Sigmoid colon (tissue), 7 donors: ENCODE measurements at regions of chr15 and their contacts with region 1.

Region 1: DNA sequence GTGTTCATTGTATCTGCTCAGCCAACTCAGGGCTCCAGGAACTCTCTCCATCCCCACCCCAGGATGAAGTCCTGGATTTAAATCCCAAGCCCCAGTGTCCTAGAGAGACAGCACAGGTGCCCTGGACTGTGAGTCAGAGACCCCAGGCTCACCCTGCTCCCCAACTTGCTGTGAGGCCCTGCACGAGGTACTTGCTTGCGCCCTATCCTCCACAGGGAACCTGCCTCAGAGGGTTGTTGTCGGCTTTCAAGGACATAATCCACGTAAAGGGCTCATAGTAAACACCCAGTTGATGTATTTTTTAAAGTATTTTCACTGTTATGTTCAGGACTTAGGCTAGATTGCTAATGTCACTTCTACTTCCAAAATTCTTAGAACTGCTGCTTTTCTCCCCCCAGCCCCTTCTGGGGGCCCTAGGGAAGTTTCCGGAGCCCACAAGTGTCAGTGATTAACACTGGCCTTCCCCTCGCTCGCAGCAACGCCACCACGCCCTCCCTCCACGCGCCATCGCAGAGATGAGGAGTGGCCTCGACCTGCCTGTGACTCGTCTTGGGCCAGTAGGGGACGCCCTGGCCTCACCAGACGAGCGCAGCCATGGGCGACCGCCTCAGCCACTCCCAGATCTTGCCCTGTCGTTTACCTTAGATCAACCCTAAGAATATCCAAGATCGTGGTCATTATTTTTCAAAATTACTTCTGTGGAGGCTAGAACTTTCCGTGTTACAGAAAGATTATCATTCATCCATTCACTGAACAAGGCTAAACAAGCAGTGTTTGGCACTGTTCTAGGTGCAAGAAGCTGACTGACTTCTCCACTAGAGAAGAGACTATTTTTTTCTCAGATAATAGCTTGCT is 6.0 kb upstream of the SRP14 start:
- DNase-seq: peak; percentile 93
- H3K4me3 ChIP-seq: peak overlapping the region in 1 of 4 donors; percentile 18
- H3K27ac ChIP-seq: peak overlapping the region; percentile 31 to 65 (median 47)
- H3K4me1 ChIP-seq: peaks cover 0 to 55% (median 40%) of the 10 kb centered on the region in 4 donors
- H3K27me3 ChIP-seq: no peaks in the 10 kb centered on the region
- CTCF ChIP-seq: peak; percentile 90 to 93 (median 92)
- EP300 ChIP-seq: no peak
- POLR2A ChIP-seq: no peak

Region 2: GRCh38 chr15:39728845-39729244 is 316.1 kb before region 1 on chr15:
- intact Hi-C with region 1: no loop called
- DNase-seq: no peak
- H3K4me3 ChIP-seq: no peak overlapping the region
- H3K27ac ChIP-seq: no peak overlapping the region
- H3K4me1 ChIP-seq: no peaks in the 10 kb centered on the region
- H3K27me3 ChIP-seq: no peaks in the 10 kb centered on the region
- CTCF ChIP-seq: no peak
- EP300 ChIP-seq: no peak
- POLR2A ChIP-seq: no peak

Region 3: GRCh38 chr15:40160689-40161688 is 116.0 kb after region 1 on chr15 and contains the start of gene BUB1B:
- intact Hi-C with region 1: loop called (anchors 2 kb)
- DNase-seq: peak; percentile 95
- H3K4me3 ChIP-seq: peak within 1 kb of the TSS; percentile 28 to 60 (median 50)
- H3K27ac ChIP-seq: no peak within 1 kb of the TSS
- H3K4me1 ChIP-seq: peaks cover 0 to 13% (median 6%) of the 10 kb centered on the region in 4 donors
- H3K27me3 ChIP-seq: no peaks in the 10 kb centered on the region
- CTCF ChIP-seq: no peak
- EP300 ChIP-seq: no peak
- POLR2A ChIP-seq: no peak
- total RNA-seq, gene BUB1B: 0.33 to 3.6 (median 1.2) TPM

Region 4: DNA sequence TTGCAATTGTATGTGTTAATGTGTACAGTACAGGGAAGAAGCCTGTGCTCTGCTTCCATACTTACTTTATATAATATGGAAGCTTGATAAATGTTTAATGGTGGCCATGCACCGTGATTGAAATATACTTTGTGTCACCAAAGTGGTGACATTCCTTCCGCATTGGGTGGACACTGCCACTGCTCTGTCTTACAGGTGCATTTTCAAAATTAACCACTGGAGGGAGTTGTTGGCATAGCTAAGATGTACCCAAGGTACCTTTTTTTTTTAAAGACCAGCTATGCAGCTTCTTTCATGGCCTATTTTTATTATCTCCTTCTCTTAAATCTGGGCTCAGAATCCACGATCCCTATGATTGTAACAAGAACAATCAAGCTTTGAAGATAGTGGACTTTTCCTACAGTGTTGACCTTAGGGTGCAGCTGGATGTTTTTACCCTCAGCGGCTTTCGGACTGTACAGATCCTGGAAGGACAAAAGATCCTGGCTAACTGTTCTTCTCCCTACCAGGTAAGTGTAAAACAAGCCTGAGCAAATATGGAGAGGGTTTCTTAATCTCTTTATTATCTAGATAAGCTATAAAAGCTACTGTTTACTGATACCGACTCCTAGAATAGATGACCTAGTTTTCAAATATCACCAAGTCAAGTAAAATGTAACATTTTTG is 172.3 kb after region 1 on chr15:
- intact Hi-C with region 1: loop called (anchors 5 kb)
- DNase-seq: no peak
- H3K4me3 ChIP-seq: no peak overlapping the region
- H3K27ac ChIP-seq: no peak overlapping the region
- H3K4me1 ChIP-seq: no peaks in the 10 kb centered on the region
- H3K27me3 ChIP-seq: no peaks in the 10 kb centered on the region
- CTCF ChIP-seq: peak; percentile 78 to 84 (median 82)
- EP300 ChIP-seq: no peak
- POLR2A ChIP-seq: no peak